Heart left ventricle (tissue), 16 donors: ENCODE measurements at regions of chr19 and their contacts with region 1.

Region 1: DNA sequence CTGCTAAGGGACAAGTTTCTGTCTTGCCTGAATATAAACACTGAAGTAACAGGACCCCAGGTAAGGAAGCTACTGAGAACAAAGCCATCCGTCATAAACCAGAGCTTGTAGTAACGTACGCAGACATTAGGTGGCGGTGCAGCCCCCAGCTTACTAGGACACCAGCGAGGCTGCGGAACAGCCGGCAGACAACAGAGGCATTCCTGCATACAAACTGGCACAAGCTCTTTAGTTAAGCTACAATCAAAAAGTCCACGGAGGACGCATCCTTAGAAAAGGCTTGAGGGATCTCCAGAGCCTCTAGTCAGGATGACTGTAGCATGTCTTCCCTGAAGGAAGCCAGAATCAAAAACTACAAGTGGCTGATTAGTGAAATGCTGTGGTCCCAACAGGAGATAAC is 26.2 kb downstream of the ZNF160 start:
- DNase-seq: peak in 4 of 5 donors; percentile 49 to 67 (median 60)
- ATAC-seq: peak in 3 of 4 donors; percentile 75 to 86 (median 81)
- H3K4me3 ChIP-seq: no peak overlapping the region
- H3K27ac ChIP-seq: peak overlapping the region in 5 of 12 donors; percentile 21 to 86 (median 58)
- H3K4me1 ChIP-seq: peaks cover 0 to 27% (median 11%) of the 10 kb centered on the region in 12 donors
- H3K27me3 ChIP-seq: no peaks in the 10 kb centered on the region
- CTCF ChIP-seq: peak; percentile 35 to 87 (median 81)
- POLR2A ChIP-seq: no peak

Region 2: DNA sequence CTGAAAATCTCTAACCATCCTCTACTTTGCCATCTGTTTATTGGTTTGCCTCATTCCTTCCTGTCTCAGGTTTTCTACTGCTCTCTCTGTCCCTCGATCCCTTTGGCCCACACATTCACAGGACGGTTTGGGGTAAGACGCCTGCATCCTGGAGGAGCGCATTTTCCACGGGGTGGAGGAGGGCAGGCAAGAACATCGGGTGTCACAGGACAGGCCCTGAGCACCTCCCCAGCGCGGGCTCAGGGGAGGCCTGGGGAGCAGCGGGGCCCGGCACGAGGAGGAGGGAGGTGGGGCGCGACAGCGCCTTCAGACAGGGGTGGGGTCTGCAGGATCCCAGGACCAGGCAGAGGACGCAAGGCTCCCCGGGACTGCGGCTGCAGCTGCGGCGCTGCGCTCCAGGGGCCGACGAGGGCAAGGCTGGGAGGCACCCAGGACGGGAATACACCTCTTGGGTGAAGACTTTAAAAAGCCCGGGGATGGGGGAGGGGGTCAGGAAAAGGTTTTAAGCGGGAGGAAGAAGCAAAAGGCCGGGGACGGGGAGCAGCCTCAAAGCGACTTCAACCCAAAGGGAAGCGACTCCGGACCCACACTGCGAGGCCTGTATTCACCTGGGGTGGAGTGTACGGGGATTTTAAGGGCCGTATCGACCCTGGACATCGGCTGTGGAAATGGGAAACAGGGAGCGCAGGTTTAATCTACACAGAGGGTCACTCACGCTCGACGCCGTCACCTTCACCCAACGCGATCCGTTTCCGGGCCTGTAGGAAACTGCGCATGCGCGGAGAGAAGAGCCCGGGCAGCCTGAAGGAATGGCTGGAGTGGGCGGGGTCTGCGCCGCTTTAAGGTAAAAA is 55.4 kb after region 1 on chr19 and contains the start of gene ZNF415:
- intact Hi-C with region 1: loop called in 1 of 10 experiments (anchors 5 kb)
- DNase-seq: peak; percentile 89 to 94 (median 91)
- ATAC-seq: peak; percentile 91 to 96 (median 94)
- H3K4me3 ChIP-seq: peak within 1 kb of the TSS; percentile 50 to 86 (median 70)
- H3K27ac ChIP-seq: peak within 1 kb of the TSS; percentile 66 to 92 (median 86)
- H3K4me1 ChIP-seq: peaks cover 0 to 34% (median 17%) of the 10 kb centered on the region in 12 donors
- H3K27me3 ChIP-seq: no peaks in the 10 kb centered on the region
- CTCF ChIP-seq: no peak
- POLR2A ChIP-seq: peak in 1 of 2 donors; percentile 31
- total RNA-seq, gene ZNF415: 12.8 to 38.6 (median 21.4) TPM

Region 3: DNA sequence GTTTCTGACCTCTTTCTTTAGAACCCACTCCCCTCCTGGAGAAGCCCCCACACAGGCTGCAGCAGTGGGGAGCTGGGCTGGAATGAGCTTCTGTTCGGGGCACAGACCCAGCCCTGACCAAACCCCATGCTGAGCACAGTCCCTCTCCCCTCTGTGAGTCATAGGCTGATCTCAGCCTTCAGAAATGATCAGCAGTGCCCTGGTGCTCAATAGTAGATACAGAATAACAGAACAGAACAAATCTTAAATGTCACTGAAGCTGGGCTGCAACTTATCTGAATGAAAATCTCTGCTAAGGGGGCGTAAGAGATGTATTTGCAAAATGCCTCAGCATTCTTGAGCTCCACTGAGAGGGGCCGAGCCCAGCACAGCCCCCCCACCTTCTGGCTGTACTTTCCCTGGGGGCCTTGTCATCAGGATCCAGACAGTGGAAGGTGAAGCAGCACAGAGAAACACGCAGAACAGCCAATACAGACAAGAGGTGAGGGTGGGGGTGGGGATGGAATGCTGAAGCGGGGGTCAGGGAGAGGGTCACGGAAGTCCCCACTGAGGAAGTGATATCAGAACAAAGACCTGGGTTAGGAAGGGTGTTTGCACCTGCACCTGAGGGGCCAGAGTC is 106.3 kb after region 1 on chr19:
- intact Hi-C with region 1: loop called in 1 of 10 experiments (anchors 10 kb)
- DNase-seq: no peak
- ATAC-seq: no peak
- H3K4me3 ChIP-seq: no peak overlapping the region
- H3K27ac ChIP-seq: no peak overlapping the region
- H3K4me1 ChIP-seq: no peaks in the 10 kb centered on the region
- H3K27me3 ChIP-seq: no peaks in the 10 kb centered on the region
- CTCF ChIP-seq: no peak
- POLR2A ChIP-seq: no peak

Region 4: DNA sequence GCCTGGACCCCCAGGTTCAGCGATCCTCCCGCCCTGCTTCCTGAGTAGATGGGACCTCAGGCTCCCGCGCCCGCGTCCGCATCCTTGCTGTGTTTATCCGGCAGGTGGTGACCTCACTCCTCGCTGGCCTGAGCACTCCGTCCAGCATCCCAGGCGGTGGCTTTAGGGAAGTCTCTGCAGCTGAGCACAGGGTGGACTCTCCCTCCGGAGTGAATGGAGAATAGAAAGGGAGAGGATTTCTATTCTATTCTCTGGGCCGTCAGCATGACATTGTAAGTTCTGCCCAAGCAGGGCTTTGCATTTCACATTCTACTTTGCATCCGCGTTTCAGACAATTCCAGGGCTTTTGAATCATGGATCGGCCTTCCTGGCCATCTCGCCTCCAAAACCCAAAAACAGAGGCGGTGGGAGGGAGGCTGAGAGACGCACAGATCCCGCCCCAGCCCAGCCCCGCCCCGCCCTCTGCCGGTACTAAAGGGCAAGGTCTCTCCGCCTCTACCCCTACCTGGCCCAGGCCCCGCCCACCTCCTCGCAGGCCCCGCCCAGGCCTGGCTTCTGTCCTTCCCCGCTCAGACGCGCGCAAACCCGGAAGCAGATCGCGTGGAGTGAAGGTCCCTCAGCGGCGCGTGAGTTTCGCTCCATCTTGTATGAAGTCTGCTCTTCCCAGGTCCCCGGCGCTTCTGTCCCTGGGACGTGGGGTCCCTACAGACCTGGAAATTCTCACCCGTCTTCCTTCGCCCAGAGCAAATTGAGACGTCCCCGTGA is 288.3 kb after region 1 on chr19 and contains the start of gene ZNF525:
- intact Hi-C with region 1: loop called in 1 of 10 experiments (anchors 10 kb)
- DNase-seq: peak; percentile 83 to 95 (median 86)
- ATAC-seq: peak; percentile 95 to 100 (median 100)
- H3K4me3 ChIP-seq: peak within 1 kb of the TSS; percentile 55 to 81 (median 69)
- H3K27ac ChIP-seq: peak within 1 kb of the TSS in 9 of 12 donors; percentile 46 to 70 (median 57)
- H3K4me1 ChIP-seq: peaks cover 0 to 13% (median 5%) of the 10 kb centered on the region in 12 donors
- H3K27me3 ChIP-seq: no peaks in the 10 kb centered on the region
- CTCF ChIP-seq: peak in 5 of 12 donors; percentile 4 to 23 (median 14)
- POLR2A ChIP-seq: peak in 1 of 2 donors; percentile 33
- total RNA-seq, gene ZNF525: 1.6 to 6.0 (median 3.6) TPM